ENCODE measurements at regions of chr9 and their contacts with region 1.

Region 1: DNA sequence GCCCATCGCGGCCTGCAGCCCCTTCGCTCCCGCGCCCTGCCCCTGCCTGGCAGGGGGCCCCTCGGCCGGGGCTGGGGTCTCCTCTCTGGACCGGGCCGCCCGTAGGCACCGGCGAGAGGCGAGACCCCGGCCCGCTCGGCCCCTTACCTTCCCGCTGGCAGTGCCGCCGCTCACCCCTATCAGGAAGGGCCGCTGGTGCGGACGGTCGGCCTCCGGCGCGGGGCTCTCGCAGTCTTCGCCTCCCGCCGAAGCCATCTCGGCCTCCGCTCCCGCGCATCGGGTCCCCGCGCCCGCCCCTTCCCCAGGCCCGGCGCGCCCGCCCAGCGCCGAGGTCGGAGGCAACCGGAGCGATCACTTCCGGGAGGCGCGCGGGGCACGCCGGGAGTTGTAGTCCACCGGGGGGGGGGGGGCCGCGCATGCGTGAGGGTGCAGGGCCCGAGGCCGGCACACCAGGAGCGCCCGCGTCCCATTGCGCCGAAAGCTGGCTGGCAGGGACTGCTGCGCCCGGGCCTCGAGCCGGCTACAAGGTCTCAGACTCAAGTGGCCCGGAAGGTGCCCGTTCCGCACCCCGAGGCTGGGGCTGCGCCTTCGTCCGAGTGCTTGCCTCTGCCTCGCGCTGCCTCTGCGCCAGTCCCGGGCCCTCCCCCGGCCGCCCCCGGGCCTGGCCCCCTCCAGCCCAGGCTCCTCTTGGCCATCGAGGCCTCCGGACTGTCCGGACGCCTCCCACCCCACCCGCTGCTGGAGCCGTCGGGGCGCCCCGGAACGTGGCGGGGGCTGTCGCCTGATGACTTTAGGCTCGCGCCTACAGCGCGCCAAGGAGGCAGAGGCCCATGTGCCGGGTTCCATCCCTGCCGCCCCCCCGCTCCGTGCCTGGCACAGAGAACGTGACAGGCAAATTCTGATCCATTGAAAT is at the start of gene UCK1:
- DNase-seq: peak; percentile 60
- H3K4me3 ChIP-seq: peak within 1 kb of the TSS; percentile 99
- H3K27ac ChIP-seq: peak within 1 kb of the TSS; percentile 78 to 81
- H3K4me1 ChIP-seq: peaks cover 6% of the 10 kb centered on the region
- H3K27me3 ChIP-seq: no peaks in the 10 kb centered on the region
- CTCF ChIP-seq: peak in 2 of 4 experiments; percentile 9 to 29
- POLR2A ChIP-seq: peak; percentile 32
- total RNA-seq, gene UCK1: 47.6 to 48.2 TPM

Region 2: GRCh38 chr9:131349881-131350563 is 181.2 kb before region 1 on chr9:
- intact Hi-C with region 1: loop called (anchors 1 kb)
- DNase-seq: peak; percentile 91
- H3K4me3 ChIP-seq: peak overlapping the region; percentile 8 to 27
- H3K27ac ChIP-seq: peak overlapping the region in 1 of 2 donors; percentile 33
- H3K4me1 ChIP-seq: no peaks in the 10 kb centered on the region
- H3K27me3 ChIP-seq: no peaks in the 10 kb centered on the region
- CTCF ChIP-seq: peak; percentile 61 to 93 (median 88)
- POLR2A ChIP-seq: no peak

Region 3: DNA sequence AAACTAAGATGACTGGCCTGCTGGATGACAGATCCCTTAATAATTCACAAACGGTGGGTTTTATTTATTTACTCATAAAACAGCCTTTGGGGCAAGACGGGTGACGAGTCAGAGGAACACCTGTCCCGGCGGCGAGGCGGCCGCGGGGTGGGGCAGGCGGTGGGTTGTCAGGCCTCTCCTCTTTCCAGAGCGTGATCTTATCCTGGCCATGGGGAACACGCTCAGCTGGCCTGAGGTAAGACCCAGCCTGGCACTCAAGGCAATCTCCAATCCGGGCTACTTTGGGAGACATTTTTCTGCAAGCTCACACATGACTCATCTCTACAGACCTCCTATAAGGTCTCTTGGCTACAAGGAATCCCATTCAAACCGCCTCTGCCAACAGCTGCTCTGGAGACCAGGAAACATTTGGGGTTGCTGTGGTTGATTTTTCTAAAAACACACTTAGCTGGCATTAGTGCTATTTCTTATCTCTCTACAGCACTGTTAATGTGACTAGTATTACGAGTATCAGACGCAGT is 202.4 kb after region 1 on chr9:
- intact Hi-C with region 1: no loop called
- DNase-seq: no peak
- H3K4me3 ChIP-seq: no peak overlapping the region
- H3K27ac ChIP-seq: peak overlapping the region in 1 of 2 donors; percentile 39
- H3K4me1 ChIP-seq: peaks cover 9% of the 10 kb centered on the region
- H3K27me3 ChIP-seq: no peaks in the 10 kb centered on the region
- CTCF ChIP-seq: no peak
- POLR2A ChIP-seq: no peak

Region 4: DNA sequence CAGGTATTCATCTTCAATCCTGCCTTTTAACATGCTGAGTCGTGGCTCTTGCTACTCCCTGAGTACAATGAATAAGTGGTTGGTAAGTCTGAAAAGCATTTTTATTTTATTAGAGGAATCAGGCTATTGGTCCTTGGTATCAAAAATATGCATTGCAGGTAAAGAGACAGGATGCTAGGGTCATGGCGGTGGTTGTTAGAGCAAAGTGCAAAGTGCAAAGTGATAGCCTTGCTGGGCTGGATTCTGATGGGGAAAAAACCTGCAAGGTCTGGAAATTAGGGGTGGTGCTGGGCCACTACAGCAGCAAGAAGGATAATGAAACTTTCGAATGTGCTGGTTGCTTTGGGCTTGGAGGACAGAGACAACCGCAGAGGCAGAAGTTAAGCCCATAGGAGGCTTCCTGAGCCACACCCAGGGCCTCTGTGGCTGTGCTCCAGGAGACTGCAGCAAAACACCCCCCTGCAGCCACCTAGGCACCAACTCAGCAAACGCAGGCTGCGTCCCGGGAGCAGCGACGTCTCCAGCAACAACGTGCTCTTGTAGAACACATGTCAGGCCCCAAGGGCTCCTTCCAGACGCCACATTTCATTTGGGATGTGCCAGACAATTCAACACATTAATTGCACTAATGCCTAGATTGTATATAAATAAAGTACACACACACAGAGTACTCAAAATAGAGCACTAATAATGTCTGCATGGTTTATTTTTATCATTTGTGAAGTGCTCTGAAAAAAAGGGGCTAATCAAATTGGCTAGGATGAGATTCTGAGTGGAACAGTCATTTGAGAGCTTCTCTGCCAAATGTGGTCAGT is 358.5 kb after region 1 on chr9:
- intact Hi-C with region 1: no loop called
- DNase-seq: no peak
- H3K4me3 ChIP-seq: no peak overlapping the region
- H3K27ac ChIP-seq: no peak overlapping the region
- H3K4me1 ChIP-seq: no peaks in the 10 kb centered on the region
- H3K27me3 ChIP-seq: no peaks in the 10 kb centered on the region
- CTCF ChIP-seq: no peak
- POLR2A ChIP-seq: no peak